ENCODE measurements at regions of chr14 and their contacts with region 1.

Region 1: GRCh38 chr14:24114536-24115450 is at the starts of genes DCAF11 and NRL:
- DNase-seq: peak; percentile 99
- ATAC-seq: peak; percentile 89
- H3K4me3 Mint-ChIP-seq: peak within 1 kb of the TSS; percentile 85
- H3K27ac Mint-ChIP-seq: peak within 1 kb of the TSS; percentile 97
- H3K4me1 Mint-ChIP-seq: peaks cover 28% of the 10 kb centered on the region
- H3K27me3 Mint-ChIP-seq: no peaks in the 10 kb centered on the region
- total RNA-seq, gene DCAF11: 74.0 to 86.2 TPM
- total RNA-seq, gene NRL: 1.5 to 1.6 TPM

Region 2: GRCh38 chr14:23095196-23096108 is 1019.3 kb before region 1 on chr14 and contains the start of gene C14orf119:
- CTCF ChIA-PET with region 1: no interaction called
- POLR2A ChIA-PET with region 1: no interaction called
- intact Hi-C with region 1: loop called in 1 of 2 experiments (anchors 10 kb)
- DNase-seq: peak; percentile 100
- ATAC-seq: peak; percentile 93
- H3K4me3 Mint-ChIP-seq: no peak within 1 kb of the TSS
- H3K27ac Mint-ChIP-seq: no peak within 1 kb of the TSS
- H3K4me1 Mint-ChIP-seq: peaks cover 19% of the 10 kb centered on the region
- H3K27me3 Mint-ChIP-seq: no peaks in the 10 kb centered on the region
- total RNA-seq, gene C14orf119: 43.8 to 51.5 TPM

Region 3: DNA sequence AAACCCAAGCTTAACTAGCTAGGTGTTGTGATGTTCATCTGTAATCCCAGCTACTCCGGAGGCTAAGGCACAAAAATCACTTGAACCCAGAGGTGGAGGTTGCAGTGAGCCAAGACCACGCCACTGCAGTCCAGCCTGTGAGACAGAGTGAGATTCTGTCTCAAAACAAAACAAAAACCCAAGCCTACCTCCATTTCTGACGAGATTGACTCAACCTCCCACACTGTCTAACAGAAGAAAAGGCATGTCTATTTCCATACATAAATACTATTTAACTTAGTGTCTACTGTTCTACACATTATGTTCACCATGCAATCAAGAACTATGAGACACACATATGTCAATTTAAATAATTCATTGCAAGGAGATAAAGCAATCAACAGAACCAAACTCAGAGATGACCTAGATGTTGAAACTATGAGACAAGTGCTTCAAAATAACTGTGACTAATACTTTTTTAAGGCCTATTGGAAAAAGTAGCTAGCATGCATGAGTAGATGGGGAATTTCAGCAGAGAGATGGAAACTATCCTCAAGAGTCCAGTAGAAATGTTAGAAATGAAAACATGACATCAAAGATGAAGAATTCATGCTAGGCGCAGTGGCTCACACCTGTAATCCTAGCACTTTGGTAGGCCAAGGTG is 237.1 kb before region 1 on chr14:
- CTCF ChIA-PET with region 1: no interaction called
- POLR2A ChIA-PET with region 1: no interaction called
- intact Hi-C with region 1: no loop called
- DNase-seq: peak; percentile 43
- ATAC-seq: peak; percentile 85
- H3K4me3 Mint-ChIP-seq: no peak overlapping the region
- H3K27ac Mint-ChIP-seq: peak overlapping the region; percentile 64
- H3K4me1 Mint-ChIP-seq: peaks cover 18% of the 10 kb centered on the region
- H3K27me3 Mint-ChIP-seq: peaks cover 10% of the 10 kb centered on the region

Region 4: DNA sequence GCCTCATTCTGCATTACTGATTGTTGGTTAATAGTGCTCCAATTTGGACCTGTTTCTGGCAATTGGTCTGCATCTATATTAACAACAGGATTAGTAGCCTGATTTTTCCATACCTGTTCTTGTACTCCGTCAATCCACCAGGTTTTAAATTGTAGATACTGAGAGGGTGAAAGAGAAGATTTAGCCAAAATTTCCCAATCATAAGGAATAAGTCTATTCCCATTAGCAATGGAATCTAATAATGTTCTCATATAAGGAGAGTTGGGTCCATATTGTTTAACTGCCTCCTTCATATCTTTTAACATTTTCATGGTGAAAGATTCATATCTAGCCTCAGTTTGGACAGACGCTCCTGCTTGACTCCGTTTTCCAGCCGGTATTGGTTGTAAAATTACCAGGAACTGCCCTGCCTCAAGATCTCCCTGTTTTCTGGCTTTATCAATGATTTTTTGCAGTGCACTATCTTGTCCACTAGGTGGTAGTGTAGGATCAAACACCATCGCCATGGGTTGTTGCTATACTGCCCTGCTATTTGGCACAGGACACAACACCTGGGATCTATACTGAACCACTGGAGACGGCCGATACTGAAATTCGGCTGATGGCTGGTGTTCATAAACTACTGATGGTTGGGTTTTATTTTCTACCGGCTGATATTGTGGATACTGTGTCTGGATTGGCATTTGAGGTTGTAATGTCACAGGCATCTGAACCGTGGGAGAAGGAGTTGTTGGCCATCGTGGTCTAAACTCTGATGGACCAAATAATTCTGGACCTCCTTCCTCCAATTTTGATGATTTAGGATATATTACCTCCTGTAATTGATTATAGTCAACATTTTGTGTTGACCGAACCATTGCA is 100.9 kb before region 1 on chr14:
- CTCF ChIA-PET with region 1: interaction called, 7 read pairs
- POLR2A ChIA-PET with region 1: no interaction called
- intact Hi-C with region 1: loop called (anchors 1 kb)
- DNase-seq: peak; percentile 63
- ATAC-seq: peak; percentile 98
- H3K4me3 Mint-ChIP-seq: no peak overlapping the region
- H3K27ac Mint-ChIP-seq: no peak overlapping the region
- H3K4me1 Mint-ChIP-seq: peaks cover 23% of the 10 kb centered on the region
- H3K27me3 Mint-ChIP-seq: no peaks in the 10 kb centered on the region

Region 5: GRCh38 chr14:24093901-24094761 is 20.7 kb before region 1 on chr14 and contains the start of gene PCK2:
- CTCF ChIA-PET with region 1: interaction called, 189 read pairs
- POLR2A ChIA-PET with region 1: interaction called, 13 read pairs
- intact Hi-C with region 1: loop called (anchors 1 kb)
- DNase-seq: peak; percentile 95
- ATAC-seq: peak; percentile 87
- H3K4me3 Mint-ChIP-seq: peak within 1 kb of the TSS; percentile 85
- H3K27ac Mint-ChIP-seq: peak within 1 kb of the TSS; percentile 95
- H3K4me1 Mint-ChIP-seq: peaks cover 26% of the 10 kb centered on the region
- H3K27me3 Mint-ChIP-seq: no peaks in the 10 kb centered on the region
- total RNA-seq, gene PCK2: 101 to 115 TPM

Region 6: DNA sequence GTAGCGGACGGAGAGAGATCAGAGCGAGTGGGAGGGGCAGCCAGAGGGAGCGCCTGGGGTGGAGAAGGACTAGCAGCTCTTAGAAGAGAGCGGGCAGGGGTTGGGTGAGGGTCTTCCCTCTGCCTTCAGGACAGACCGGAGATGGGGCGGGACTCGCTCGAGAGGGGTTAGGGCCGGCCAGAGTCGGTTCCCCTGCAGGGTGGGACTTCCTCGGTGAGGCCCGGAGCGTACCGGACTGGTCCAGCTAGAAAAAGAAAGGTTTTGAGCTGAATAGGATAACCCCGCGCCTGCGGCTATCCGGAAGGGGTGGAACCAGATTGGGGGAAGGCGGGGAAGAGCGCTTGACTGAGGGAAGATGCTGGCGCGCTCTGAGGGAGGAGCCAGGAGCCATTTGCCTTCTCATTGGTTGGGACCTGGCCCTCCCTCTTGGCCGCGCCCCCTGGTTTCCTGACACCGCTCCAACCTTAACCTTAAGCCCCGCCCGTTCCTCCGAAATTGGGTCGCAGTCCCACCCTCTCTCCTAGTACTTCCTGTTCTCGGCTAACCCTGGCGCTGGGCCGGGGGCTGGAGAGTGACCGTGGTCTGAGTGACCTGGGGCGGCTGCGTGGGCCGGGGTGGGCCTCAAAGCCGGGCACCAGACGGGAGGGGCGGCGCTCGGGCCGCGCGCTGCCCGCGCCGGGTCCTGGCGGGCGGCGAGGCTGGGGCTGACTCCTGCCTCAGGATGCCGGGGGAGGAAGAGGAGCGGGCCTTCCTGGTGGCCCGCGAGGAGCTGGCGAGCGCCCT is 32.4 kb after region 1 on chr14 and contains the start of gene RNF31:
- CTCF ChIA-PET with region 1: interaction called, 21 read pairs
- POLR2A ChIA-PET with region 1: interaction called, 20 read pairs
- intact Hi-C with region 1: loop called (anchors 1 kb)
- DNase-seq: peak; percentile 99
- ATAC-seq: peak; percentile 89
- H3K4me3 Mint-ChIP-seq: peak within 1 kb of the TSS; percentile 94
- H3K27ac Mint-ChIP-seq: peak within 1 kb of the TSS; percentile 97
- H3K4me1 Mint-ChIP-seq: peaks cover 57% of the 10 kb centered on the region
- H3K27me3 Mint-ChIP-seq: no peaks in the 10 kb centered on the region
- total RNA-seq, gene RNF31: 73.7 to 98.4 TPM

Region 7: GRCh38 chr14:24195191-24196070 is 80.6 kb after region 1 on chr14 and contains the start of gene TM9SF1:
- CTCF ChIA-PET with region 1: no interaction called
- POLR2A ChIA-PET with region 1: interaction called, 6 read pairs
- intact Hi-C with region 1: loop called in 1 of 2 experiments (anchors 1 kb)
- DNase-seq: peak; percentile 93
- ATAC-seq: peak; percentile 93
- H3K4me3 Mint-ChIP-seq: peak within 1 kb of the TSS; percentile 90
- H3K27ac Mint-ChIP-seq: peak within 1 kb of the TSS; percentile 93
- H3K4me1 Mint-ChIP-seq: peaks cover 50% of the 10 kb centered on the region
- H3K27me3 Mint-ChIP-seq: no peaks in the 10 kb centered on the region
- total RNA-seq, gene TM9SF1: 17.0 to 24.4 TPM

Region 8: DNA sequence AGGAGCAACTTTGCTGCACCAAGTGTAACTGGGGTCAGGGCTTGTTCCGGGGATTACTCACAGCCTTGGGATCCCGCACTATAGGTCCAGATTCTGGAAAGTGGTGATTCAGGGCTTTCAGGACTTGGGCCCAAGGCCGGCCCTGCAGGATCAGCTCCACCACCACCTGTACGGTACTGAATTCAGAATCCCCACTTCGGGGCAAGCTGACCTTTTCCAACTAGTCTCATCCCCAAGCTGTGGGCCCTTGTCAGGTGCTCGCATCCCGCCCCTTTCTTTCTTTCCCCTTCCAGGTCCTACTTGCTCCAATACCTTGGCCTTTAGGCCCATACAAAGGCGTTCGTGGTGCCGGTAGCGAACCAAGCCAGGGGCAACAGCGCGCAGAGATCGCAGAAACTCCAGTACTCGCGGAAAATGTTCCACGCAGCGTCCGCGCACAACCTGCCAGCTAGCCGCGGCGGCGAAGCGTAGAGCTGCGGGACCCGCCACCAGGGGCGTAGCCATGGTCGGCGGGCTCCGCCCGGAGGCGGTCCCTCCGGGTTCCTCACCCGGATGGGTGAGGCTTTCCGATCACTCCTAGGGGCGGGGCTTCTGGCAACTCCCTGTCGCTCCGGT is 127.1 kb after region 1 on chr14:
- CTCF ChIA-PET with region 1: interaction called, 9 read pairs
- POLR2A ChIA-PET with region 1: interaction called, 7 read pairs
- intact Hi-C with region 1: loop called in 1 of 2 experiments (anchors 1 kb)
- DNase-seq: peak; percentile 97
- ATAC-seq: peak; percentile 83
- H3K4me3 Mint-ChIP-seq: peak overlapping the region; percentile 94
- H3K27ac Mint-ChIP-seq: peak overlapping the region; percentile 99
- H3K4me1 Mint-ChIP-seq: peaks cover 55% of the 10 kb centered on the region
- H3K27me3 Mint-ChIP-seq: no peaks in the 10 kb centered on the region

Region 9: GRCh38 chr14:24473211-24473610 is 358.4 kb after region 1 on chr14:
- CTCF ChIA-PET with region 1: no interaction called
- POLR2A ChIA-PET with region 1: no interaction called
- intact Hi-C with region 1: no loop called
- DNase-seq: no peak
- ATAC-seq: no peak
- H3K4me3 Mint-ChIP-seq: no peak overlapping the region
- H3K27ac Mint-ChIP-seq: no peak overlapping the region
- H3K4me1 Mint-ChIP-seq: no peaks in the 10 kb centered on the region
- H3K27me3 Mint-ChIP-seq: no peaks in the 10 kb centered on the region

Measured in activated CD4-positive, alpha-beta T cell treated with anti-CD3 and anti-CD28 coated beads for 36 hours (primary cell).